ENCODE measurements at regions of chr18 and their contacts with region 1.

Region 1: GRCh38 chr18:3604498-3605408 is 154.8 kb downstream of the TGIF1 start:
- DNase-seq: no peak
- ATAC-seq: no peak
- H3K4me3 ChIP-seq: peak overlapping the region; percentile 38 to 46
- H3K27ac ChIP-seq: peak overlapping the region; percentile 100
- H3K4me1 ChIP-seq: peaks cover 81 to 94% of the 10 kb centered on the region in 2 experiments
- H3K27me3 ChIP-seq: no peaks in the 10 kb centered on the region
- CTCF ChIP-seq: no peak
- POLR2A ChIP-seq: peak; percentile 25
- RAD21 ChIP-seq: no peak

Region 2: DNA sequence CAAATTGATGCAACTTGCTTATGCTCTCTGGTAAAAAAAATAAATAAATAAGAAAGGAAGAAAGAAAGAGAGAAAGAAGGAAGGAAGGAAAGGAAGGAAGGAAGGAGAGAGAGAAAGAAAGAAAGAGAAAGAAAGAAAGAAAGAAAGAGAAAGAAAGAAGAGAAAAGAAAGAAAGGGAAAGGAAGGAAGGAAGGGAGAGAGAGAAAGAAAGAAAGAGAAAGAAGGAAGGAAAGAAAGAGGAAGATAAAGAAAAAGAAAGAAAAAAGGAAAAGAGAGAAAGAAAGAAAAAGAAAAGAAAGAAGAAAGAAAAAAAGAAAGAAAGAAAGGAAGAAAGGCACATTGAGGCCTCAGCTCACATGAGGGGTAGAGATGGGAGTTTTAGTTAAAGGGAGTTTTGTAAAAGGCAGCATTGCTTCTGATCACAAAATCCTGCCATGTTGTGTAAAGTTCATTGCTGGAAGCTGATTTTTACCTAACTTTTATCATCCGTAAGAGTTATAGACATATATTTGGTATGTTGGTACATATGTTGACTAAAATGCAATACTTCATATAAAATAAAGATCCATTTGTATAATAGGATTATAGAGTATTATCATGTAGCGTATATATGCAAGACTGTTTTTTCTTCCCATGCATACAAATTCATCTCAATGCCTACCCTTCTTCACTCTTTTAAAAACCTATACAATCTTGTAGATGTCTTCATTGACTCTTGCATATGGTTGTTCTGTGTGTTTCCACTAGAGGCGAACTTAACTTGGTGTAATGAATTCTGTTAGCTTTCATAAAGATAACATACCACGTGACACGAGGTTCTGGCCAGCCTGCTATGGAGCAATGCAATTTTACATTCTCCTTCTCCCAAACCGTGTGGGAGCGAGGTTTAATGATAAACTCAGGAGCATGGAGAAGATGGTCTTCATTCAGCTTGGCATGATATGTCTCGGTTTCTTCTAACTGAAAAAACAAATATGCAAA is 417.8 kb before region 1 on chr18:
- CTCF ChIA-PET with region 1: no interaction called
- POLR2A ChIA-PET with region 1: no interaction called
- RAD21 ChIA-PET with region 1: no interaction called
- intact Hi-C with region 1: no loop called
- DNase-seq: no peak
- ATAC-seq: peak; percentile 62; the same call in 1 of the 2 replicates
- H3K4me3 ChIP-seq: no peak overlapping the region
- H3K27ac ChIP-seq: no peak overlapping the region
- H3K4me1 ChIP-seq: no peaks in the 10 kb centered on the region
- H3K27me3 ChIP-seq: no peaks in the 10 kb centered on the region
- CTCF ChIP-seq: peak in 1 of 3 experiments; percentile 24; a peak in 1 of 6 replicates
- POLR2A ChIP-seq: no peak
- RAD21 ChIP-seq: peak; percentile 6; the same call in 1 of the 2 replicates

Region 3: GRCh38 chr18:3297025-3297984 is 307.4 kb before region 1 on chr18:
- CTCF ChIA-PET with region 1: no interaction called
- POLR2A ChIA-PET with region 1: interaction called, 15 read pairs
- RAD21 ChIA-PET with region 1: no interaction called
- intact Hi-C with region 1: no loop called
- DNase-seq: peak; percentile 94
- ATAC-seq: peak; percentile 91
- H3K4me3 ChIP-seq: peak overlapping the region; percentile 76 to 90
- H3K27ac ChIP-seq: peak overlapping the region; percentile 82
- H3K4me1 ChIP-seq: peaks cover 0 to 21% of the 10 kb centered on the region in 2 experiments; a peak in 2 of 4 replicates
- H3K27me3 ChIP-seq: no peaks in the 10 kb centered on the region
- CTCF ChIP-seq: peak; percentile 56 to 87 (median 61); a peak in 5 of 6 replicates
- POLR2A ChIP-seq: peak; percentile 95
- RAD21 ChIP-seq: no peak; the same call in 1 of the 2 replicates

Region 4: GRCh38 chr18:3454365-3455089 is 150.2 kb before region 1 on chr18:
- CTCF ChIA-PET with region 1: no interaction called
- POLR2A ChIA-PET with region 1: interaction called, 15 read pairs
- RAD21 ChIA-PET with region 1: no interaction called
- intact Hi-C with region 1: no loop called
- DNase-seq: no peak
- ATAC-seq: no peak
- H3K4me3 ChIP-seq: peak overlapping the region; percentile 78 to 85
- H3K27ac ChIP-seq: peak overlapping the region; percentile 90; the same call in 1 of the 2 replicates
- H3K4me1 ChIP-seq: peaks cover 36 to 72% of the 10 kb centered on the region in 2 experiments
- H3K27me3 ChIP-seq: no peaks in the 10 kb centered on the region
- CTCF ChIP-seq: peak in 2 of 3 experiments; percentile 63 to 68; a peak in 4 of 6 replicates
- POLR2A ChIP-seq: no peak
- RAD21 ChIP-seq: no peak

Region 5: GRCh38 chr18:3623769-3624545 is 19.2 kb after region 1 on chr18:
- CTCF ChIA-PET with region 1: interaction called, 3 read pairs
- POLR2A ChIA-PET with region 1: interaction called, 126 read pairs
- RAD21 ChIA-PET with region 1: interaction called, 3 to 4 read pairs
- intact Hi-C with region 1: loop called (anchors 1 kb)
- DNase-seq: peak; percentile 96
- ATAC-seq: peak; percentile 77
- H3K4me3 ChIP-seq: peak overlapping the region; percentile 30 to 31
- H3K27ac ChIP-seq: peak overlapping the region; percentile 100
- H3K4me1 ChIP-seq: peaks cover 86 to 96% of the 10 kb centered on the region in 2 experiments
- H3K27me3 ChIP-seq: no peaks in the 10 kb centered on the region
- CTCF ChIP-seq: no peak
- POLR2A ChIP-seq: no peak
- RAD21 ChIP-seq: no peak

Region 6: GRCh38 chr18:3652380-3653262 is 47.9 kb after region 1 on chr18:
- CTCF ChIA-PET with region 1: interaction called, 4 read pairs
- POLR2A ChIA-PET with region 1: interaction called, 113 read pairs
- RAD21 ChIA-PET with region 1: interaction called in 1 of 2 experiments, 3 read pairs
- intact Hi-C with region 1: loop called (anchors 2 kb)
- DNase-seq: peak; percentile 98
- ATAC-seq: peak; percentile 72
- H3K4me3 ChIP-seq: peak overlapping the region; percentile 39 to 52
- H3K27ac ChIP-seq: peak overlapping the region; percentile 96
- H3K4me1 ChIP-seq: peaks cover 92 to 93% of the 10 kb centered on the region in 2 experiments
- H3K27me3 ChIP-seq: no peaks in the 10 kb centered on the region
- CTCF ChIP-seq: peak in 2 of 3 experiments; percentile 7 to 13; a peak in 1 of 6 replicates
- POLR2A ChIP-seq: no peak
- RAD21 ChIP-seq: no peak

Region 7: GRCh38 chr18:3782901-3783300 is 178.1 kb after region 1 on chr18:
- CTCF ChIA-PET with region 1: no interaction called
- POLR2A ChIA-PET with region 1: no interaction called
- RAD21 ChIA-PET with region 1: no interaction called
- intact Hi-C with region 1: no loop called
- DNase-seq: no peak
- ATAC-seq: no peak
- H3K4me3 ChIP-seq: no peak overlapping the region
- H3K27ac ChIP-seq: no peak overlapping the region
- H3K4me1 ChIP-seq: no peaks in the 10 kb centered on the region
- H3K27me3 ChIP-seq: no peaks in the 10 kb centered on the region
- CTCF ChIP-seq: no peak
- POLR2A ChIP-seq: no peak
- RAD21 ChIP-seq: no peak

Measured in HCT116 (cell line).